A549 (cell line): ENCODE measurements at regions of chr16 and their contacts with region 1.

Region 1: DNA sequence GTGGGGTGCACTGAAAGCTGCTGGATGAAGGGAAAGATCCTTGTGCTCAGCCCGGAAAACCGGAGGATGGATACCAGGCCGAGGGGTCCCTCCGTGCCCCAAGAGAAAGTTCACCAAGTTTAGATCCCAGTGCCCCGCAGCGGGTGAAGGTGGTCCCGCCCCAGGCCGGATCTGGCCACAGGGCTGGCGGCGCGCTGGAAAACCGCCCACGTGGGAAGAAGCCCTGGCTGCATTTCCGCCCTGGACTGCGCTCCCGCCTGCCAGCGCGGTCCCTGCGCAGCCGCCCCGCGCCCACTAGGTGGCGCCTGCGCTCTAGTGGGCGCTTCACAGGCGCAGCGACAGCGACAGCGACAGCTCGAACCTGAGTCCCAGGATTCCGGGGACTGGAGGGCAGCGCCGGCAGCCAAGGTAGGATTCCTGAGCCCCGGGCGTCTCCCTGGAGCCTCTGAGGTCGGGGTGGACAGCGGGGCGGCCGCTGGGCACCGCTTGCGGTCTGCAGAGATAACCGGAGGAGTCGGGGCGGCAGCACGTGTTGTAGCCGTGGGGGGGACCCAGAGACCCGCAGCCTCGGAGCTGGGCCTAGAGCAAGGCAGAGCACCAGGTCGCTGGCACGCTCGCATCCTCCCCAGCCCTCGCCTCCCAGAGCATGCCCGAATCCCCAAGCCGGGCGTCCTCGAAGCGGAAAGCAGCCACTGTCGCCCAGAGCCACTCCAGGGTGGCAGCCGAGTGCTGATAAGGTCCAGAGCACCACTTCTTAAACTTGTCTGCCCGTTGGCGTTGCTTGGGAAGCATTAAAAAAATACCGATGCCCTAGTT is at the start of gene CHD9:
- DNase-seq: peak; percentile 83 to 91
- ATAC-seq: peak; percentile 70 to 89
- H3K4me3 ChIP-seq: peak within 1 kb of the TSS; percentile 53
- H3K27ac ChIP-seq: peak within 1 kb of the TSS; percentile 96 to 98
- H3K4me1 ChIP-seq: peaks cover 50% of the 10 kb centered on the region
- CTCF ChIP-seq: peak; percentile 98
- EP300 ChIP-seq: no peak
- POLR2A ChIP-seq: peak; percentile 30; the same call in 1 of the 2 replicates
- RAD21 ChIP-seq: peak; percentile 85 to 99
- polyA plus RNA-seq, gene CHD9: 44.9 and 51.6 TPM in 2 replicates

Region 2: DNA sequence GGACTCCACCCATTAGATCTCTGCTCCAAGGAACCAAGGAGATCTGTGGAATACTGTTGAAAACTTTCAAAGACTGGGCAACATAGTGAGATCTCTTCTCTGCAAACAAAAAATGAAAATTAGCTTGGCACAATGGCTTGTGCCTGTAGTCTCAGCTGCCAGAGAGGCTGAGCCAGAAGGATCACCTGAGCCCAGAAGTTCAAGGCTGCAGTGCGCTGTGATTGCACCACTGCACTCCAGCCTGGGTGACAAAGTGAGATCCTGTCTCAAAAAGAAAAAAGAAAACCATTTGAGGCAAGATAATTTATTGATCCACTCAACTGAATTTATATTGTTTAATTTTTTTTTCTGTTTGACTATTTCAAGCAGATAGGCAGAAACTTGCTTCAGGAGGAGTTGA is 57.0 kb before region 1 on chr16:
- CTCF ChIA-PET with region 1: no interaction called
- POLR2A ChIA-PET with region 1: no interaction called
- DNase-seq: no peak
- ATAC-seq: no peak
- H3K4me3 ChIP-seq: no peak overlapping the region
- H3K27ac ChIP-seq: no peak overlapping the region
- H3K4me1 ChIP-seq: no peaks in the 10 kb centered on the region
- CTCF ChIP-seq: no peak
- EP300 ChIP-seq: no peak
- POLR2A ChIP-seq: no peak
- RAD21 ChIP-seq: no peak

Region 3: DNA sequence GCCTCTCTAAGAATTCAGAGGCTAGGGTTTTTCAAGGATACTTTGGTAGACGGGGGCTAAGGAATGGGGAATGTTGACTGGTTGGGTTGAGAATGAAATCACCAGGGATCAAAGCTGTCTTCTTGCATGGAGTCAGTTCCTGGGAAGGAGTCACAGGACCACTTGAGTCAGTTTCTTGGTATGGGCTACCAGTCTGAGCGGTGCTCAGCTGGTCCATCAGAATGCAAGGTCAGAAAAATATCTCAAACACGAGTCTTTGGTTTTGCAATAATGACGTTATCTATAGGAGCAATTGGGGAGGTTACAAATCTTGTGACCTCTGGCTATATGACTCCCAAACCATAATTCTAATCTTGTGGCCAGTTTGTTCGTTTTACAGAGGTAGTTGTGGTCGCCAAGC is 20.6 kb before region 1 on chr16:
- CTCF ChIA-PET with region 1: no interaction called
- POLR2A ChIA-PET with region 1: no interaction called
- DNase-seq: no peak
- ATAC-seq: no peak
- H3K4me3 ChIP-seq: no peak overlapping the region
- H3K27ac ChIP-seq: no peak overlapping the region
- H3K4me1 ChIP-seq: no peaks in the 10 kb centered on the region
- CTCF ChIP-seq: no peak
- EP300 ChIP-seq: no peak
- POLR2A ChIP-seq: no peak
- RAD21 ChIP-seq: no peak

Region 4: DNA sequence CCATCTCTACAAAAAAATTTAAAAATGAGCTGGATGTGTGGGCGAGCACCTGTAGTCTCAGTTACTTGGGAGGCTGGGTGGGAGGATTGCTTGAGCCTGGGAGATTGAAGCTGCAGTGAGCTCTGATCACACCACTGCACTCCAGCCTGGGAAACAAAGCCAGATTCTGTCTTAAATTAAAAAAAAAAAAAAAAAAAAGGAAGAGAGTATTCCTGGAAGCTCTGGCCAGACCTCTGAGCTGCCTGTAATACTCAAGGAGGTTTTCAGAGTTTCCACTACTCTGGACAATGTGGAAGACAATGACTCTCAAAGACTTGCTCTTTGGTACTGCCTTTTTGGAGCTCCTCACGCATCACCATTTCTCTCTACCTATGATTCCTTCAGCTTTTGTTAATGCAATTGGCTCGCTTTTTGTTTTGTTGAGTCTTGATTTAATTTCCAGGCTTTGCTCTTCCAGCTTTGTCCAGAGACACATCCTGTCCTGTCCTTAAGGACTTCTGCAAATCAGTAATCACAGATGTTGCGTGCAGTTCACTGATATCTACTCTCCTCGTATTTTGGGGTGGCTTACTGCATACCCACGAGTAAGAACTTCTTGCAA is 10.7 kb after region 1 on chr16:
- CTCF ChIA-PET with region 1: interaction called, 25 read pairs
- POLR2A ChIA-PET with region 1: no interaction called
- DNase-seq: no peak
- ATAC-seq: no peak
- H3K4me3 ChIP-seq: no peak overlapping the region
- H3K27ac ChIP-seq: 0 out of 6 replicates have a peak overlapping the region, but pooled peaks of 1 of the 2 experiments have one; percentile 1
- H3K4me1 ChIP-seq: peaks cover 15% of the 10 kb centered on the region
- CTCF ChIP-seq: no peak
- EP300 ChIP-seq: no peak
- POLR2A ChIP-seq: no peak
- RAD21 ChIP-seq: no peak

Region 5: DNA sequence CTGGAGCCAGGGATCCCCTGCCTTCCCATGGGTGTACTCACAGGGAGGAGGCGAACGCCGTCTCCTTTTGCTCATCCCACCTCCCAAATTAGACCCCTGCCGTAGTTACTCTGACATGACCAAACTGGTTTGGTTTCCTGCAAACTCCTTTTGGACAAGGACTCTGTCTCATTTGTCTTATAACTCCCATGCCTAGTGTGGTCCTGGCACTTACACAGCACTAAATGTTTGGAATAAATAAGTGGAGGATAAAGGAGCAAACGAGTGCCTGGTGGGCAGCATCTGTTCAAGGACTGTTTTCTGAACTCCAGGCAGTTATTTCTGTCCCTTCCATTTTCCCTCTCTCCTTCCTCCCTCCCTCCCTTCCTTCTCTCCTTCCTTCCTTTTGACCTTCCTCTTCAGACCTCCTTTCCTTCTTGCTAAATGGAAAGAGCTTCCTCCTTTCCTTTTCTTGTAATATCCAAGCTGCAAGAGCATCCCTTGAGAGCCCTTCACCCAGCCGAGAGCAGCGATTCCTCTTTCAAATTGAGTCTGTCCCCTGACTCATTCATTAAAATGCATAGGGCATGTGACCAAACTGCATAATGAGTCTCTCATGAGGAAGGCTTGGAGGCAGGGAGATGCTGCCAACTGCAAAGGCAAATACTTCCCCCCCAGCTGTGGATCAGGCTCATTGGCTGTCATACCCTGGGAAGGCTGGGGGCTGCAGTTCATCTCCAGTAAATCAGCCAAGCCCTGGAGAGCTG is 36.8 kb after region 1 on chr16:
- CTCF ChIA-PET with region 1: interaction called, 32 read pairs
- POLR2A ChIA-PET with region 1: no interaction called
- DNase-seq: no peak
- ATAC-seq: no peak
- H3K4me3 ChIP-seq: no peak overlapping the region
- H3K27ac ChIP-seq: peak overlapping the region; percentile 46 to 72; a peak in 5 of 6 replicates
- H3K4me1 ChIP-seq: peaks cover 50% of the 10 kb centered on the region
- CTCF ChIP-seq: no peak
- EP300 ChIP-seq: no peak
- POLR2A ChIP-seq: no peak
- RAD21 ChIP-seq: no peak

Region 6: DNA sequence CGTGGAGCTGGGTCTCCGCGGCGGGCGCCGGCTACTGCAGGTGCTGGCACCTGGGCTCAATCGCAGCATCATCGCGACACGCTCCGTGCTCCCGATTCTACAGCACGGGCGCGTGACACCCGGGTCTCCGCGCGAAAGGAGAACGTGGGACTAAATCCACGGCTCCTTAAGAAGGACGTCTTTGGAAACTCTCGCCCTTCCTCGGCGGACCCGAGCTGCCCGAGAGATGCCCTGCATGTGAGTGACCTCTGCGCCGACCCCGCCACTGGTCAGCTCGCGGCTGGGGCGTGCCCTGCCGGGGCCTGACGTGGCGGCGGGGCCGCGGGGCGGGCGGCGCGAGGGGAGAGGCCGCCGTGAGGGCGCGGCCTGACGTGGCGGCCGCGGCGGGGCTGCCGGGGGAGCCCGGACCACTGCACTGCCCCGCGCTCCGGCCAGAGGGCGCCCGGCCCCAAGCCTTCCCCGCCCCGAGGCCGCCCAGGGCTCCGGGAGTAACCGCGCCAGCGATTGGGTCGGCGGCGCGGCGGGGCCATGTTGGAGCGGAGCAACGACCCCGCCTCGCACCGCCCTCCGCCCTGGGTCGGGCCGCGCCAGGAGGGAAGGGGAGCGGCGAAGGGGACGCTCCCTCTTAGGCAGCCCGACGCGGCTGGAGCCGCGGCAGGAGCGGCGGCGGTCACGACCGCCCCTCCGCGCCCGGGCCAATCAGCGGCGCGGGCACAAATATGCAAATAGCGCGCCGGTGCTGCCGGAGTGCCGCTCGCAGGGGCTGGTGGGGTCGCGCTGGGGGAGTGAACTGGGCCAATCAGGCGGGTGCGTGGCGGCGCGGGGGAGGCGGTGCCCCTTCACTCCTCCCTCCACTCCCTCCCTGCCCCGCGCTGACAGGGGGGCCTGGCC is 75.5 kb after region 1 on chr16:
- CTCF ChIA-PET with region 1: interaction called, 20 read pairs
- POLR2A ChIA-PET with region 1: interaction called, 14 read pairs
- DNase-seq: peak; percentile 94 to 96
- ATAC-seq: peak; percentile 87 to 94
- H3K4me3 ChIP-seq: peak overlapping the region; percentile 96
- H3K27ac ChIP-seq: peak overlapping the region; percentile 94 to 96
- H3K4me1 ChIP-seq: peaks cover 29% of the 10 kb centered on the region
- CTCF ChIP-seq: peak; percentile 83
- EP300 ChIP-seq: no peak
- POLR2A ChIP-seq: peak; percentile 72
- RAD21 ChIP-seq: peak; percentile 57 to 83

Region 7: DNA sequence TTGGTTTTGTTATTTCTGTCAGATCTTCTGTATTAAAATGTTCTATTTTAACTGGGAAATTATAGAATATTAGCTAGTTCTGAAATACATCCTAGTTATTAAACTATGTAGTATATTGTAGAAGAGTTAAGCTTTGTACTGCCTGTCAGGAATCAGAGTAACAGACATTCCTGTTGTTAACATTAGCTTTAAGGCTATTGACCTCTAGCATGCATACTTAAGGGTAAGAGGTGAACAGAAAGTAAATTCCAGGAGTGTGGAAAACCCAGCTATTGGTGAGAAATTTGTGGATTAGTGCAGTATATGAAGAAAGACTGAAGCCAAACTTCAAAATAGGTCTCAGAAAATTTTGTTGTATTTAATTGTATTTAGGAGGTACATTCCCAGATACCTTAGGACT is 111.2 kb after region 1 on chr16:
- CTCF ChIA-PET with region 1: interaction called, 21 read pairs
- POLR2A ChIA-PET with region 1: no interaction called
- DNase-seq: no peak
- ATAC-seq: no peak
- H3K4me3 ChIP-seq: no peak overlapping the region
- H3K27ac ChIP-seq: no peak overlapping the region
- H3K4me1 ChIP-seq: no peaks in the 10 kb centered on the region
- CTCF ChIP-seq: no peak
- EP300 ChIP-seq: no peak
- POLR2A ChIP-seq: no peak
- RAD21 ChIP-seq: no peak

Region 8: GRCh38 chr16:53282975-53283946 is 228.4 kb after region 1 on chr16:
- CTCF ChIA-PET with region 1: interaction called, 10 read pairs
- POLR2A ChIA-PET with region 1: interaction called, 3 read pairs
- DNase-seq: peak; percentile 58 to 65
- ATAC-seq: peak; percentile 83 to 84
- H3K4me3 ChIP-seq: no peak overlapping the region
- H3K27ac ChIP-seq: no peak overlapping the region
- H3K4me1 ChIP-seq: no peaks in the 10 kb centered on the region
- CTCF ChIP-seq: peak; percentile 68
- EP300 ChIP-seq: no peak
- POLR2A ChIP-seq: no peak
- RAD21 ChIP-seq: peak; percentile 62 to 66

Region 9: DNA sequence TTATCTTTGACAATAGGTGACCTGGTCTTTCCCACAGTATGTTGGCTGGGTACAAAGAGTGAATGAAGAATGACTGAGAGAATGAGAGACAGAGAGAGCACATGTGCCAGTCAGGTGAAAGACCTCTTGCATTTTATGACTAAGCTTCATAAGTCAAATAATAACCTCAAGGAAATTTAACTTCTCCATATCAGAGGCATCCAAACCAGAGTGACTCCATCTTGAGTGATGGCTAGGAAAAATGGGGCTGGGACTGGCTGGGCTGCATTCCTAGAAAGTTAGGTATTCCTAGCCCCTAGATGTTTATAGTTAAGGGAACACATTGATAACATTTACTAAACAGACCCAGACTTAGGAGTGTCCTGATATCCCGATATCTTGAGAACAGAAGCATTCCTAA is 375.5 kb after region 1 on chr16:
- CTCF ChIA-PET with region 1: no interaction called
- POLR2A ChIA-PET with region 1: no interaction called
- DNase-seq: no peak
- ATAC-seq: no peak
- H3K4me3 ChIP-seq: no peak overlapping the region
- H3K27ac ChIP-seq: no peak overlapping the region
- H3K4me1 ChIP-seq: no peaks in the 10 kb centered on the region
- CTCF ChIP-seq: no peak
- EP300 ChIP-seq: no peak
- POLR2A ChIP-seq: no peak
- RAD21 ChIP-seq: no peak

Region 10: DNA sequence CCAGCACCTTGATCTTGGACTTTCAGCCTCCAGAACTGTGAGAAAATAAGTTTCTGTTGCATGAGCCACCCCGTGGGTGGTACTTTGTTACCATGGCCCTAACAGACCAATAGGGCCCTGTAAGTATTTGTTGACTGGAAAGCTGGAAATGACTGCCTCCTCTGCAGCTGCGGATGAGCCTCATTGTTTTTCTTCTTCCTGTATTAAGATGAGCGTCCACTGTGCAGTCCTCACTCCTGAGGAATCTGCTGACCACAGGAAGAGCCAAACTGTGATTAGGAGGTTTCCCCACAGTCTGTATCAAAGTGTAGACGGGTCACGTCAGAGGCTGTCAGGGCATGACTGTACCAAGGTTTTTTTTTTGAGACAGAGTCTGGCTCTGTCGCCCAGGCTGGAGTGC is 460.4 kb after region 1 on chr16:
- CTCF ChIA-PET with region 1: no interaction called
- POLR2A ChIA-PET with region 1: no interaction called
- DNase-seq: no peak
- ATAC-seq: no peak
- H3K4me3 ChIP-seq: no peak overlapping the region
- H3K27ac ChIP-seq: no peak overlapping the region
- H3K4me1 ChIP-seq: peaks cover 14% of the 10 kb centered on the region; the same call in 2 of the 3 replicates
- CTCF ChIP-seq: no peak
- EP300 ChIP-seq: no peak
- POLR2A ChIP-seq: no peak
- RAD21 ChIP-seq: no peak